PC-9 (cell line): ENCODE measurements at regions of chr15 and their contacts with region 1.

Region 1: DNA sequence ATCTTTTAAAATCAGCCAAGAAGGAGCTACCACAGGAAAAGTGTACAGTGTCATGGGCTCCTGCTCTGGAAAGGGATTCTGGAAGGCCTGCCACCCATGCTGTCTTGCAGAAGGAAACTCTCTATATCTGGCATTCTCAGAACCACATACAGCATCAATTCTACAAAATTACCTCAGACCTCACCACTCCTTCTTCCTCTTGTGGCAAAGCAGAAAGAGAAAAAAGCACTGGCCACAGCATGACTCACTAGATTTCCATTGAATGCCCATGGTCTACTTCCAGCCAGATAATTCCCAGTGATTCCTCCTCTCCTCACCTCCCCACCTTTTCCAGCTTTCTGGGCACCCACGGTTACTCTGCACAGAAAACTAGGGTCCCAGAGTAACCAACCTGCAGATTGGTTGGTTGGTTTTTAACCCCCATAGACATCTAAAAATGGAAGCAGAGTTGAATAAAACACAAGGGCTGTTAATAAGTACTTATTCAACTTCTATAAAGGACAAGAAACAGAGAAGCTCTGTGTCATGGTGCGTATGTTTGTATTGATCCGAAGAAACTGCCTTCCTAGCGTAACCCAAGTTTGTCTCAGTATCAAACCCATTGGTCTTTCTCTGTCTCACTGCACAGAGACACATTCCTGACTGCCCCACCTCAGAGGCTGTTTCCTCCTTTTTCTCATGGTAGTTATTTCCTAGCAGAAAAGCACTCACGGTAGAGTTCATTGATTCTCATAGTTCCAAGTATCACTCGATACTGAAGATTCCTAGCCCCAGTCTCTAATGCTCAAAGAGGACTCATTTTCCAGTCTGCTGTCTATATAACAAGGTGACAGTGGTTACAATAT is 67.7 kb downstream of the LDHAL6B start:
- DNase-seq: peak in 1 of 2 experiments; percentile 54
- H3K4me3 ChIP-seq: no peak overlapping the region
- H3K27ac ChIP-seq: peak overlapping the region; percentile 98
- H3K4me1 ChIP-seq: peaks cover 73% of the 10 kb centered on the region
- H3K27me3 ChIP-seq: no peaks in the 10 kb centered on the region
- CTCF ChIP-seq: no peak

Region 2: DNA sequence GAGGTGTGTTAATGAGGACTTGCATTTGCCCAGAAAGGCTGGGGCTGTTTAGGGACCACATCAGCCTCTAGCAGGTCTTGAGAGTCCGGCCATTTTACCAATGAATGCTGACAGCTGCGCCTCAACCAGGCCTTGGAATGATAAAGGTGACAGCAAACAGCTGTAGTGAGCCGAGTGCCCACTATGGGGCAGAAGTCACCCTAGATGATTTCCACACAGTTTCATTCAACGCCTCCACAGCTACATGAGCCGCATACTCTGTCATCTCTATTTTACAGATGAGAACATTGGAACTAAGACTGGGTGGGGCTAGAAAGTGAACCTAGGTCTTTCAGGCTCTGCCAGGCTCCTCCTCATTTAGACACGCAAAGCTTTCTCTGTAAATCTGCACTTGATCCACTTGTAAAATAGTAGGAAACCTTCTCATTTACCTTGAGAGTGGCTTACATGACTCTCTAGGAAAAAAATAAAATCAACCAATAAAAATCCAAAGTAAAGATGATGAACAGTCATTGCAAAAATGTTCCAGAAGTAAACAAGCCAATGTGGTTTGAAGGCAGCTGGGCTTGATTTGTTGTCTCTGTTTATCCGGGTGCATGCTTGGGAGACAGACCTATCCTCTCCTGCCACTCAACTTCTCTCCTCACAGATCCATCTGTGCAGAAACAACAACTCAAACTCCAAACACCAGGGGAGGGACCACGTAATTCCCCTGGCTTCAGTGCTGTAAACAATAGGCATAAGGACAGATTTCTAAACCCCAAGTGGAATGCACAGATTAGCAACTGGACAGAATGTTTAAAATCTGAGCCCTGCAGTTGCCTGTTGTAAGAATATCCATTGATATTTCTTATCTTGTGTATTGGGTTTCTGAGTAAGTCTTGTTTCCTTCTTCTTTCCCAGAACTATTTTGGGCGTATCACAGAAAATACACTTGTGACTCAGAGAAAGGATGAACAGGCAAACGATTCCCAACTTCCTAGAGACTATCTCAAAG is 99.2 kb before region 1 on chr15:
- CTCF ChIA-PET with region 1: no interaction called
- POLR2A ChIA-PET with region 1: no interaction called
- intact Hi-C with region 1: loop called (anchors 5 kb)
- DNase-seq: peak; percentile 24 to 40
- H3K4me3 ChIP-seq: no peak overlapping the region
- H3K27ac ChIP-seq: peak overlapping the region; percentile 70
- H3K4me1 ChIP-seq: peaks cover 20% of the 10 kb centered on the region
- H3K27me3 ChIP-seq: no peaks in the 10 kb centered on the region
- CTCF ChIP-seq: peak; percentile 55

Region 3: DNA sequence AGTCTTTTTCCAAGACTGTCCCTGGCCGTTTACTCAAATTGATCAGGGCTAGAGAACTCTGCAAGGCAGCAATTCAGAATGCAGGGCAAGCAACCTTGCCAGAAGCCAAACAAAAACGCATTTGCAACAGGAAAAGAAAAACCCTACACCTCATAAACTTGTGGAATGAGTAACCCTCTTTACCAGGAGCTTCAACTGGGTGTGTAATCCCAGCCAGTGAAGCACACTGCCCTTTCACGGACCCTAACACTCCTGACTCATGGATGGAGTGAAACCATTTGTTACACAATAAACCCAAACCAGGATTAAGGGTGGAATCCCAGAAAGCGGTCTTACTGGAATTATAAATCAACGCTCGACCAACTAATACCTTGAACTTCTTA is 82.5 kb before region 1 on chr15:
- CTCF ChIA-PET with region 1: no interaction called
- POLR2A ChIA-PET with region 1: interaction called, 23 read pairs
- intact Hi-C with region 1: no loop called
- DNase-seq: peak; percentile 65 to 97
- H3K4me3 ChIP-seq: peak overlapping the region; percentile 45; the same call in 1 of the 2 replicates
- H3K27ac ChIP-seq: peak overlapping the region; percentile 99
- H3K4me1 ChIP-seq: peaks cover 32% of the 10 kb centered on the region
- H3K27me3 ChIP-seq: no peaks in the 10 kb centered on the region
- CTCF ChIP-seq: no peak

Region 4: GRCh38 chr15:59255647-59256380 is 18.5 kb before region 1 on chr15:
- CTCF ChIA-PET with region 1: no interaction called
- POLR2A ChIA-PET with region 1: interaction called, 4 read pairs
- intact Hi-C with region 1: loop called (anchors 1 kb)
- DNase-seq: peak; percentile 46 to 93
- H3K4me3 ChIP-seq: no peak overlapping the region
- H3K27ac ChIP-seq: peak overlapping the region; percentile 90
- H3K4me1 ChIP-seq: peaks cover 65% of the 10 kb centered on the region
- H3K27me3 ChIP-seq: no peaks in the 10 kb centered on the region
- CTCF ChIP-seq: no peak

Region 5: GRCh38 chr15:59372352-59373211 is 98.2 kb after region 1 on chr15 and contains the start of gene MYO1E:
- CTCF ChIA-PET with region 1: no interaction called
- POLR2A ChIA-PET with region 1: interaction called, 5 read pairs
- intact Hi-C with region 1: loop called (anchors 2 kb)
- DNase-seq: peak; percentile 91
- H3K4me3 ChIP-seq: peak within 1 kb of the TSS; percentile 97
- H3K27ac ChIP-seq: peak within 1 kb of the TSS; percentile 89
- H3K4me1 ChIP-seq: peaks cover 30% of the 10 kb centered on the region
- H3K27me3 ChIP-seq: no peaks in the 10 kb centered on the region
- CTCF ChIP-seq: no peak
- total RNA-seq, gene MYO1E: 156 and 213 TPM in 2 replicates

Region 6: DNA sequence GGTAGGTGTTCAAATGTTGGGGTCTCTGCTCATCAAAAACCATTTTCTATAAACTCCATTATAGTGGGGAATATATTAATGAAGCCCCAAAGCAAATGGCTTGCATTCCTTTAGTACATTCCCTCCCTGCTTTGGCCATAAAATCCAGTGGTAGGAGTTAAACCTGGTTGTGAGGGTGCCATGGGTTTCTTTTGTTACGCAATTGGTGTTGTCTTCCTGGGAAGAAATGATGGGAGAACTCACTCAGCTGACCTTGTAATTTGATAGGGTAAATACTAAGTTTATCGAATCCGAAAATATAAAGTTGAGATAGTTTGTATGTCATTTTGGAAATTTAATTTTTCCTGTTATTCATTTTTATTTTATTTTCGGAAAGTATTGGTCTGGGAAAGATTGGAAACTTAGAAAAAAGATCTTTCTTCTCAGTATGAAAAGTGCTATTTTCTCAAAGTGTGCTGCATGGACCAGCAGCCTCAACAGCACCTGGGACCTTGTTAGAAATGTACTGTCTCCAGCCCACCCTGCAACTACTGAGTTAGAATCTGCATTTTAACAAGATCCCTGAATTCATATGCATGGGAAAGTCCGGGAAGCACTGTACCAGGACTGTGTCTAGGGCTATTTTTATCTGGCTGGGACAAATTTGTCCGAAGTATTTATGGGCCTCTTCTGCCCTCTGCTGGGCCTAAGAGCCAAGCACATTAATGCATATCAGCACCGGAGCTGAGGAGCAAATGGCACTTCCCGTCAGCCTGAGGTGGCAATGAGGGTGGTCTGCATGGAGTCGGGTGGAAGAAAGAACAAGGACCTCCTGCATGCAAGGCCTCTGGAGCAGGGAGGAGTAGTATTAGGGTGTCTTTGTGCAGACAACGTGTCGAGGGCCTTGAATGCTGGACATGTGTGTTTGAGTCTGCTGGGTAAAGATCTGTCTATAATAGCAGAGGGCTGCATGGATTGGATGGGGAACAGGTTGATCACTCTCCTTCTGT is 218.3 kb after region 1 on chr15:
- CTCF ChIA-PET with region 1: no interaction called
- POLR2A ChIA-PET with region 1: interaction called, 13 read pairs
- intact Hi-C with region 1: no loop called
- DNase-seq: peak in 1 of 2 experiments; percentile 54
- H3K4me3 ChIP-seq: no peak overlapping the region
- H3K27ac ChIP-seq: no peak overlapping the region
- H3K4me1 ChIP-seq: 0 out of 2 replicates have a peak, but pooled peaks cover 4% of the 10 kb centered on the region
- H3K27me3 ChIP-seq: no peaks in the 10 kb centered on the region
- CTCF ChIP-seq: peak; percentile 84

Region 7: GRCh38 chr15:60374628-60375081 is 1100.3 kb after region 1 on chr15:
- CTCF ChIA-PET with region 1: no interaction called
- POLR2A ChIA-PET with region 1: no interaction called
- intact Hi-C with region 1: loop called (anchors 5 kb)
- DNase-seq: peak; percentile 90 to 93
- H3K4me3 ChIP-seq: no peak overlapping the region
- H3K27ac ChIP-seq: peak overlapping the region; percentile 97
- H3K4me1 ChIP-seq: peaks cover 56% of the 10 kb centered on the region
- H3K27me3 ChIP-seq: no peaks in the 10 kb centered on the region
- CTCF ChIP-seq: no peak